Prostate gland (tissue), 2 donors: ENCODE measurements at regions of chr19 and their contacts with region 1.

Region 1: DNA sequence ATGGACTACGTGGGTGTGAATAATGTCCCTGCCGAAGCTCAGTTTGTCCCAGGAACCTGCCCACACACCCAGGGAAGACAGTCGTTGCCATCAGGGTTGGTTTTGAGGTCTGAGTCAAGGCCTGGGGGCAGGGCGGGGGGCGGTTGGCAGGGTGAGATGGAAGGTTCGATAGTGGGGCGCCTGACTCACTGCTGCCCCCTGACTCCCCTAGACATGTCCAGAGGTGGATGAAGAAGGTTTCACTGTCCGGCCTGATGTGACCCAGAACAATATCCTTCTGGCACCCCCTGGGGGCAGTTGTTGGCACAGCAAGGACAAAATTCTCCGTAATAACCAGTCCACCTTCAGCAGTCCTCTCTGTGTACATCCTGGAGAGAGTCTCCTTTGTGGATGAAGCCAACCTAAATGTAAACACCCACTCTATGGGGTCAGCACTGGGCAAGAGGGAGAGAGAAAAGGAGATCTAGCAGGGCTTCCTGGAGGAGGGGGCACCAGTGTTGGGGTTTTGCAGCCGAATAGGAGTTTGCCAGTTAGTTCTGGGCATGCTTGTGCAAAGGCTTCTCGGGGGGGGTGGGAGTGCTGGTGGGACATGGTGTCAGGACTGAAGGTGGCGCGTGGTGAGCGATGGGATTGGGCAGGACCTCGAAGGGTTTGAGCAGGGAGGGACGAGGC is 19.6 kb upstream of the B3GNT3 start:
- DNase-seq: no peak
- H3K4me3 ChIP-seq: no peak overlapping the region
- H3K27ac ChIP-seq: no peak overlapping the region
- H3K4me1 ChIP-seq: no peaks in the 10 kb centered on the region
- H3K27me3 ChIP-seq: peaks cover 2% of the 10 kb centered on the region
- CTCF ChIP-seq: no peak
- POLR2A ChIP-seq: no peak

Region 2: GRCh38 chr19:17605761-17606745 is 169.3 kb before region 1 on chr19:
- intact Hi-C with region 1: loop called (anchors 10 kb)
- DNase-seq: peak; percentile 10
- H3K4me3 ChIP-seq: peak overlapping the region; percentile 5 to 23
- H3K27ac ChIP-seq: no peak overlapping the region
- H3K4me1 ChIP-seq: peaks cover 6% of the 10 kb centered on the region
- H3K27me3 ChIP-seq: peaks cover 4% of the 10 kb centered on the region
- CTCF ChIP-seq: peak in 2 of 4 experiments; percentile 51 to 57
- POLR2A ChIP-seq: no peak

Region 3: GRCh38 chr19:17706750-17707181 is 68.6 kb before region 1 on chr19:
- intact Hi-C with region 1: no loop called
- DNase-seq: no peak
- H3K4me3 ChIP-seq: no peak overlapping the region
- H3K27ac ChIP-seq: no peak overlapping the region
- H3K4me1 ChIP-seq: no peaks in the 10 kb centered on the region
- H3K27me3 ChIP-seq: no peaks in the 10 kb centered on the region
- CTCF ChIP-seq: no peak
- POLR2A ChIP-seq: no peak

Region 4: DNA sequence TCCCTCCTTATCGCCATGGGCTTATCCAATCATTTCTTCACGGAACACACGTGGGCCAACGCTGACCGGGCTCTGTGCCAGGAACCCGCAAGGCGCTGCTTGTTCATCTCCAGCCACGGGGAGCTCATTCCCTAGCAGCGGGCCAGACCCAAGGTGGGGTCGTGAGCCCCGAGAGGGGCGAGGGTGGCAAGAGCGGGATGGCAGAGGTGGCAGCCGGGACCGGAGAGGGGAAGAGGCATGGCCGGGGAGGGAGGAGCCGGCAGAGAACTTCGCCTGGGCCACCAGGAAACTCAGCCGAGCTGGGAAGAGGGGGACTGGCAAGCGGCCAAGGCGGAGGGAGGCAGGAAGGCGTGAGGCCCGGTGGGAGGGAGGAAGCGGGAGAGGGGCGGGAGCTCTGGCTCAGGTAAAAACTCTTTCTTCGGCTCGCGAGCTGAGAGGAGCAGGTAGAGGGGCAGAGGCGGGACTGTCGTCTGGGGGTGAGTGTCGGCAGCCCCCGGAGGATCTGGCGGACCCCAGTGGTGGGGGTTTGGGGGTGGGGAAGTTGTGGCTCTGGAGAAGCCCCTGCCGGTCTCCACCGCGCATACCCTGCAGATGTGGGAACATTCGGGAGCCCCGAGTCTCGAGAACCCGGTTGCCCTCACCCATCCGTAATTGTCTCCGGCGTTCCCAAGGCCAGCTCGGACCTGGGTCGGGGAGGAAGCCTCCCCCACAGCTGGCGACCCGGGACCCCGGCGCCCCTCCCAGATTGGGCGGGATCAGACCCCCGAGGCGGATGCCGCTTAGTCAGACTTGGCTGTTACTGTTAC is 19.6 kb after region 1 on chr19 and contains the start of gene B3GNT3:
- intact Hi-C with region 1: no loop called
- DNase-seq: peak; percentile 30
- H3K4me3 ChIP-seq: peak within 1 kb of the TSS in 1 of 2 donors; percentile 20
- H3K27ac ChIP-seq: peak within 1 kb of the TSS in 1 of 2 donors; percentile 65
- H3K4me1 ChIP-seq: no peaks in the 10 kb centered on the region
- H3K27me3 ChIP-seq: no peaks in the 10 kb centered on the region
- CTCF ChIP-seq: no peak
- POLR2A ChIP-seq: peak; percentile 76
- total RNA-seq, gene B3GNT3: 5.2 to 11.9 TPM